ENCODE measurements at regions of chr20 and their contacts with region 1.

Region 1: GRCh38 chr20:44080646-44081267 is 106.2 kb downstream of the JPH2 start:
- DNase-seq: peak in 1 of 2 donors; percentile 78
- H3K4me3 ChIP-seq: no peak overlapping the region
- H3K27ac ChIP-seq: no peak overlapping the region
- H3K4me1 ChIP-seq: peaks cover 0 to 2% of the 10 kb centered on the region in 2 donors
- H3K27me3 ChIP-seq: no peaks in the 10 kb centered on the region
- CTCF ChIP-seq: peak; percentile 95 to 99 (median 97)

Region 2: DNA sequence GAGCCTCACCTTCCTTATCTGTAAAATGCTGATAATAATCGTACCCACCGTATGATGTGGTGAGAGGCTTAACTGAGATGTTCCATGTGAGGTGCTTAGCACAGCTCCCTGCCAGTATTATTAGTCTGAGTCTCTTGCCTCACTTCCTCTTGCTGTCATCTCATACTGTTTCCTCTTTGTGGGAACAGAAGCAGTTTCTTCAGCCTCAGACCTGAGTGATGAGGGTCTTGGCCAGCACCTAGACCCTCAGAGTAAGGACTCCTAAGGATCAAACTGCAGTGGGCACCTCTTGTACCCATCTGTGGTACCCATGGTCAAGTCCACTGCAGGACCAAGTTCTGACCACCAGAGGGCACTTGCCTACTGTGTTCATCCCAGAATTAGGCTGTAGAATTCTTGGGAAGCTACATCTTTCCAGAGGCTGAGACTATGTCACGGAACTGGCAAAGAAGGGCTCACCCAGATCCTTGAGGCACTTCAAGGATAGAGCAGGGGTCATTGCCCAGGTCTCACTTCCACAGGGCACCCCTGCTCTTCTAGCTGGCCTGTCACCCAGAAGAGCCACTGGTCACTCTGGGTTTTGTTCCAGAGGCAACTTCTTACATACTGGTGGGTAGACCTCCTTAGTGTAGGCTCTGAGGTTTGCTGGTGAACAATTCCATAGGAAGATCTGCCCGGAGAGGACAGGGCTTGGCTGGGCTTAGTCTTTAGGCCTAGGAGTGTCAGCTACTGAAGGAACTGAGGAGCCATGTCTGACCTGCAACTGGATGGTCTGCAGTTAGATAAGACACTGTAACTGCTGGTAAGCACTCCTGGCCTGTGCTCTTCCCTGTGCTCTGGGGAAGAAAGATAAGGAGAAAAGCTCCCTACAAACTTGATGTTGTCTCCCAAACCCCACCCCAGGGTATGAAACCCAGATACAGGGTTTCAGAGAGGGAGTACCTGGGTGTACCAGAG is 542.6 kb before region 1 on chr20:
- intact Hi-C with region 1: loop called (anchors 1 kb)
- DNase-seq: peak in 1 of 2 donors; percentile 72
- H3K4me3 ChIP-seq: no peak overlapping the region
- H3K27ac ChIP-seq: no peak overlapping the region
- H3K4me1 ChIP-seq: no peaks in the 10 kb centered on the region
- H3K27me3 ChIP-seq: no peaks in the 10 kb centered on the region
- CTCF ChIP-seq: peak; percentile 57 to 84 (median 80)

Region 3: GRCh38 chr20:43840382-43841070 is 240.2 kb before region 1 on chr20:
- intact Hi-C with region 1: loop called (anchors 5 kb)
- DNase-seq: no peak
- H3K4me3 ChIP-seq: no peak overlapping the region
- H3K27ac ChIP-seq: no peak overlapping the region
- H3K4me1 ChIP-seq: no peaks in the 10 kb centered on the region
- H3K27me3 ChIP-seq: no peaks in the 10 kb centered on the region
- CTCF ChIP-seq: peak in 1 of 3 experiments; percentile 36